Heart left ventricle (tissue), 16 donors: ENCODE measurements at regions of chr10 and their contacts with region 1.

Region 1: DNA sequence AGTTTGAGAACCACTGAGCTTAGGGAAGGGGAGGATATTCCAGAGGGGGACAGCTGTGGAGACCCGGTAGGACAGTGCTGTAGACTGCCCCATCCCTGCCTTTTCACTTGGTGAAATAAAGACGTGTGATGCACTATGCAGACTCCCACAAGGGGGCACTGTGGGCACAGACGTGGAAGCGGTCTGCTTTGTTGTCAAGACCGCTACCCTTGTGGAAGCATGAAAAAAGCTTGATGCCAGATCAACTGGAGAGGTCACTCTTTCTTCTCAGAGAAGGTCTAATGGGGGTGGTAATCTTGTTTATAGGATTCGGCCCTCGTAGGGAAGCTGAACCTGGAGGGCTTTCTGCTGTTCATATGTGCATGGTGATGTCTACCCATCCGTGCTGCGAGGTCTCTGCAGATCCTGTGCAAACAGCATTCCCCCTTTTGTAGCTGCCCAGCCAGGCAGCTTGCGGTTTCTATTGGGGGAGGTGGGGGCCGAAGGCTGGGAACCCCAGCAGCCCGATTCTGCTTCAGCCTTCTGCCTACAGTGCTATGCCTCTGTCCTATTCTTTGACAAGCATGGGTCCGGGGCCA is 13.7 kb downstream of the RPS24 start:
- DNase-seq: peak; percentile 84 to 93 (median 86)
- ATAC-seq: peak; percentile 55 to 81 (median 78)
- H3K4me3 ChIP-seq: no peak overlapping the region
- H3K27ac ChIP-seq: no peak overlapping the region
- H3K4me1 ChIP-seq: peaks cover 0 to 23% (median 8%) of the 10 kb centered on the region in 12 donors
- H3K27me3 ChIP-seq: no peaks in the 10 kb centered on the region
- CTCF ChIP-seq: peak; percentile 85 to 95 (median 88)
- POLR2A ChIP-seq: no peak

Region 2: DNA sequence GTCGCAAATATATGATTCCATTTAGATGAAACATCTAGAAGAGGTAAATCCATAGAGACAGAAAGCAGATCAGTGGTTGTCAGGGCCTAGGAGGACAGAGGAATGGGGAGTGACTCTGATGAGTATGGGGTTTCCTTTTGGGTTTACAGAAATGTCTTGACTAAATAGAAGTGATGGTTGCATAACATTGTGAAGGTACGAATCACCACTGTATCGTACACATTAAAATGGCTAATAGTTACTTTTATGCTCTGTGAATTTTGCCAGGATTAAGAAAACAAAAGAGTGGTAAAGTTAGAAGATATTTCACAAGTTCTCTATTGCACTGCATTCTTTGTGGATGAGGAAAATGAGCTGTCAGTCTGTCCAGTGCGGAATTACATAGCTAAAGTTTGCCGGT is 817.2 kb before region 1 on chr10:
- intact Hi-C with region 1: no loop called
- DNase-seq: no peak
- ATAC-seq: no peak
- H3K4me3 ChIP-seq: no peak overlapping the region
- H3K27ac ChIP-seq: peak overlapping the region in 1 of 12 donors; percentile 63
- H3K4me1 ChIP-seq: no peaks in the 10 kb centered on the region
- H3K27me3 ChIP-seq: peaks cover 0 to 4% (median 0%) of the 10 kb centered on the region in 9 donors
- CTCF ChIP-seq: no peak
- POLR2A ChIP-seq: no peak

Region 3: GRCh38 chr10:77774940-77775391 is 272.4 kb before region 1 on chr10:
- intact Hi-C with region 1: no loop called
- DNase-seq: no peak
- ATAC-seq: no peak
- H3K4me3 ChIP-seq: no peak overlapping the region
- H3K27ac ChIP-seq: no peak overlapping the region
- H3K4me1 ChIP-seq: no peaks in the 10 kb centered on the region
- H3K27me3 ChIP-seq: no peaks in the 10 kb centered on the region
- CTCF ChIP-seq: no peak
- POLR2A ChIP-seq: no peak

Region 4: DNA sequence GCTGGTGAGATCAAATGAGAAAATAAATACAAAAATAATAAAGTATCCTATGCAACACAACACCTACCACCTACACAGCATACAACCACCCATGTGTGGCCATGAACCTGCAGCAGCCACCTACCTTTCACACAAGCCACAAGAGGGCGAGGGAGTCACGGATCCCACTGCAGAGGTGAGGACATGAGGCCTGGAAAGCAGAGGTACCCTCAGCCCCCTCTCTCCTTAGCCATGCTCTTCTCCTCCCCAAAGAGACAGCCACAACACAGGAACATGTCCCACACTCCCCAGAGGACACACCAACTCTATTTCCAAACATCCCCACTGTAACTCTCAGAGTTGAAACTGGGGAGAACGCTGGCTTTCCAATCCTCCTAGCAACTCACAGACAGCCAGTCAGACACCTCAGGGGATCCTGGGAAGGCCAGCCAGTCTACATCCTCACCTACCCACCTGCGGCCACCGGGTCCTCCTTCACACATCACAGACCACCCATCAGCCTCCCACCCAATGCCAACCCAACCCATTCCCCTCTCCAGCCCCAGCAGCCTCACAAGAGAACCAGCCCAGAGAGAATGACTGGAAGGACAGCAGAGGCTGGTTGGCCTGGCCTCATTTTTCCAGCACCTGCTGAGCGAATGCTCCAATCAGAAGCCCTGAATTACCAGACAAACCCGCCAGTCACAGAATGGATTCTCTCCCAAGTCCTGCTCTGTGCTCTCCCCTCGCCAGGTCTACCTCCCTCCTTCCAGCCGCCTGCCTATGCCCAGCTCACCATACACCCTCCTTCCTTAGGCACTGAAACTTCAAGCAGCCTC is 139.3 kb before region 1 on chr10:
- intact Hi-C with region 1: no loop called
- DNase-seq: no peak
- ATAC-seq: peak in 1 of 4 donors; percentile 24
- H3K4me3 ChIP-seq: no peak overlapping the region
- H3K27ac ChIP-seq: no peak overlapping the region
- H3K4me1 ChIP-seq: peaks cover 0 to 33% (median 8%) of the 10 kb centered on the region in 12 donors
- H3K27me3 ChIP-seq: no peaks in the 10 kb centered on the region
- CTCF ChIP-seq: peak in 1 of 12 donors; percentile 16
- POLR2A ChIP-seq: no peak

Region 5: GRCh38 chr10:78017856-78018255 is 29.5 kb before region 1 on chr10:
- intact Hi-C with region 1: no loop called
- DNase-seq: no peak
- ATAC-seq: no peak
- H3K4me3 ChIP-seq: no peak overlapping the region
- H3K27ac ChIP-seq: no peak overlapping the region
- H3K4me1 ChIP-seq: peaks cover 0 to 4% (median 0%) of the 10 kb centered on the region in 12 donors
- H3K27me3 ChIP-seq: no peaks in the 10 kb centered on the region
- CTCF ChIP-seq: no peak
- POLR2A ChIP-seq: no peak

Region 6: GRCh38 chr10:78292982-78293865 is 245.8 kb after region 1 on chr10:
- intact Hi-C with region 1: loop called in 1 of 10 experiments (anchors 10 kb)
- DNase-seq: no peak
- ATAC-seq: no peak
- H3K4me3 ChIP-seq: no peak overlapping the region
- H3K27ac ChIP-seq: no peak overlapping the region
- H3K4me1 ChIP-seq: peaks cover 0 to 5% (median 0%) of the 10 kb centered on the region in 12 donors
- H3K27me3 ChIP-seq: no peaks in the 10 kb centered on the region
- CTCF ChIP-seq: no peak
- POLR2A ChIP-seq: no peak

Region 7: GRCh38 chr10:78437998-78438906 is 390.8 kb after region 1 on chr10:
- intact Hi-C with region 1: loop called in 1 of 10 experiments (anchors 10 kb)
- DNase-seq: no peak
- ATAC-seq: peak in 2 of 4 donors; percentile 13 to 38
- H3K4me3 ChIP-seq: no peak overlapping the region
- H3K27ac ChIP-seq: no peak overlapping the region
- H3K4me1 ChIP-seq: peaks cover 0 to 36% (median 14%) of the 10 kb centered on the region in 12 donors
- H3K27me3 ChIP-seq: no peaks in the 10 kb centered on the region
- CTCF ChIP-seq: peak in 2 of 12 donors; percentile 12 to 28
- POLR2A ChIP-seq: no peak

Region 8: GRCh38 chr10:78972947-78973900 is 925.8 kb after region 1 on chr10:
- intact Hi-C with region 1: loop called in 1 of 10 experiments (anchors 10 kb)
- DNase-seq: peak; percentile 86 to 91 (median 89)
- ATAC-seq: peak; percentile 45 to 80 (median 72)
- H3K4me3 ChIP-seq: peak overlapping the region; percentile 11 to 66 (median 54)
- H3K27ac ChIP-seq: peak overlapping the region; percentile 91 to 100 (median 98)
- H3K4me1 ChIP-seq: peaks cover 5 to 45% (median 30%) of the 10 kb centered on the region in 12 donors
- H3K27me3 ChIP-seq: no peaks in the 10 kb centered on the region
- CTCF ChIP-seq: no peak
- POLR2A ChIP-seq: peak in 1 of 2 donors; percentile 73

Region 9: DNA sequence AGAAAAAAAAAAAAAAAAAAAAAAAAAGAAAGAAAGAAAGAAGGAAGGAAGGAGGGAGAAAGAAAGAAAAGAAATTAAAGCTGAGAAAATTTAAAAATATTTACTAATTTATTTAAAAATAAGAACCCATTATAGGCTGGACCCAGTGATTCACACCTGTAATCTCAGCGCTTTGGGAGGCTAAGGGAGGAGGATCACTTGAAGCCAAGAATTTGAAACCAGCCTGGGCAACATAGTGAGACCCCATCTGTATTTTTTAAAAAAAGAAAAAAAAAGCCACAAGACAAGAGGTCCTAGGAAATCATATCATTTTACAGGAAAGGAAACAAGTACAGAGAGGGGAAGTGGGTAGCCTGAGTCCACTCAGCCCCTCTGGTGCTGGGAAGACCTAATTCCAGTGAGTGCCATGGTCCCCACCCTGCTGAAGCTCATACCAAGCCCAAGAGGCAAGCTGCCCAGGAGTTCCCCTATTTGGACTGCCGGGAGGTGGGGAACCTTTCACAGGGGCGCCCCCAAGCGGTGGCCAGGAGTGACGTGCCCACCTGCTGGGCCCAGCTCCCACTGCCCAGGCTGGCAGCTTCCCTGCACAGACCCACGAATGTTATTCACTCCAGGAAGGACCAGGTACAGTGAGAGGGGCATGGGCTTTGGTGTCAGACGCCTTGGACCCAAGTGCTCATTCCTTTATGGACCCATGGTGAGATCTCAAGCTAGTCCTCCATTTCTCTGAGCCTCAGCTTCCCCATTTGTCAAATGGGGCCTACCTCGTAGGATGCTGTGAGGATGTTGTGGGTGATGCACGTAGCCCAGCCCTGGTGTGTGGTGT is 1155.0 kb after region 1 on chr10:
- intact Hi-C with region 1: loop called in 8 of 10 experiments (anchors 1 to 5 kb)
- DNase-seq: peak in 3 of 5 donors; percentile 56 to 68 (median 63)
- ATAC-seq: peak in 3 of 4 donors; percentile 31 to 71 (median 59)
- H3K4me3 ChIP-seq: no peak overlapping the region
- H3K27ac ChIP-seq: peak overlapping the region in 4 of 12 donors; percentile 1 to 62 (median 11)
- H3K4me1 ChIP-seq: peaks cover 0 to 38% (median 11%) of the 10 kb centered on the region in 12 donors
- H3K27me3 ChIP-seq: no peaks in the 10 kb centered on the region
- CTCF ChIP-seq: peak; percentile 25 to 58 (median 48)
- POLR2A ChIP-seq: no peak